ENCODE measurements at regions of chr4 and their contacts with region 1.

Region 1: DNA sequence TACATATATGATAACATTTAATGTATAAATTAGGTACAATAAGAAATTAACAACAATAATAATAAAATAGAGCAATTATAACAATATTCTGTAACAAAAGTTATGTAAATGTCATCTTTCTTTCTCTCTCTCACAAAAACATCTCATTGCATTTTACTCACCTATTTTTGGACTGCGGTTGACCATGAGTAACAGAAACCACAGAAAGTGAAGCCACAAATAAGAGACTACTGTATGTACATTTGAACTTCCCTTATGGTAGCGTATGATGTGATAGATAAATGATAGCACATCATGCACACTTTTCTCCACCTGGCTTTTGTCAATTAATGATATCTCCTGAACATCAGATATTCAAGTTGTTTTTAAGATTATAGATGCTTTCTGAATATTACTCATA is 80.5 kb downstream of the HNRNPD start:
- DNase-seq: peak; percentile 79
- H3K4me3 ChIP-seq: peak overlapping the region; percentile 13
- H3K27ac ChIP-seq: peak overlapping the region; percentile 66
- H3K4me1 ChIP-seq: peaks cover 26% of the 10 kb centered on the region
- CTCF ChIP-seq: no peak

Region 2: GRCh38 chr4:82268050-82268825 is 25.1 kb before region 1 on chr4:
- CTCF ChIA-PET with region 1: no interaction called
- POLR2A ChIA-PET with region 1: no interaction called
- intact Hi-C with region 1: no loop called
- DNase-seq: peak; percentile 66
- H3K4me3 ChIP-seq: no peak overlapping the region
- H3K27ac ChIP-seq: no peak overlapping the region
- H3K4me1 ChIP-seq: peaks cover 18% of the 10 kb centered on the region
- CTCF ChIP-seq: peak; percentile 94

Region 3: DNA sequence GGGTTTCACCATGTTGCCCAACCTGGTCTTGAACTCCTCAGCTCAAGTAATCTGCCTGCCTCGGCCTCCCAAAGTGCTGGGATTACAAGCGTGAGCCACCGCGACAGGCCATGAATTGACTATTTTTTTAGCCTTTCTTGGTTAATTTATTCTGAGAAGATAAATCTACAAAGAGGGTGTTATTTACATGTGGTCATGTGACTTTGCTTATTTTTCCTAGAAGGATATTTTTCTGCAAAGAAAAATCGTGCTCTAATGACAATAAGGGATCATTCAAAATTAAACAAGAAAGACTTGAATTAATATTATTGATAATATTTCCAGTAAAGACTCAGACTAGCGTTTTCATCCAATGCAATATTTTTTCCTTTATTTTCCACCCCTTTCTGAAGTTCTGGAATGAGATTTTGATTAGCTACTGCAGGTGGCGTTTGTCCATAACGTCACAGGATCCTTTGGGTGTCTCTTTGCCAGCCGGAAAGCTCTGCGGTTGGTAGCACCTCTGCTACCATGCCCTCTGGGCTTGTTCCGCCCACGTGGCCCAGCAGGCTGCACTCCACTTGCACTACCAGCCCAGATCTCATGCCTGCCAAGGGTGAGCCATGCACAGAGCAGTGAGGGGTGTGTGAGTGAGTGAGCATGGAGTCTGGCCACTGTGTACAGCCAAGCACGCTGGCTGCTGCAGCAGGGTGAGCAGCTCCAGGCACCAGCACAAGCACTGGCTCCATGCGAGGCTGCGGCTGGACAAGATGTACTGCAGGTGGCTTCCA is 86.8 kb after region 1 on chr4:
- CTCF ChIA-PET with region 1: no interaction called
- POLR2A ChIA-PET with region 1: no interaction called
- intact Hi-C with region 1: no loop called
- DNase-seq: no peak
- H3K4me3 ChIP-seq: no peak overlapping the region
- H3K27ac ChIP-seq: no peak overlapping the region
- H3K4me1 ChIP-seq: peaks cover 9% of the 10 kb centered on the region
- CTCF ChIP-seq: no peak

Region 4: GRCh38 chr4:82402201-82402775 is 109.0 kb after region 1 on chr4:
- CTCF ChIA-PET with region 1: interaction called, 10 read pairs
- POLR2A ChIA-PET with region 1: no interaction called
- intact Hi-C with region 1: no loop called
- DNase-seq: no peak
- H3K4me3 ChIP-seq: no peak overlapping the region
- H3K27ac ChIP-seq: no peak overlapping the region
- H3K4me1 ChIP-seq: no peaks in the 10 kb centered on the region
- CTCF ChIP-seq: no peak

Region 5: DNA sequence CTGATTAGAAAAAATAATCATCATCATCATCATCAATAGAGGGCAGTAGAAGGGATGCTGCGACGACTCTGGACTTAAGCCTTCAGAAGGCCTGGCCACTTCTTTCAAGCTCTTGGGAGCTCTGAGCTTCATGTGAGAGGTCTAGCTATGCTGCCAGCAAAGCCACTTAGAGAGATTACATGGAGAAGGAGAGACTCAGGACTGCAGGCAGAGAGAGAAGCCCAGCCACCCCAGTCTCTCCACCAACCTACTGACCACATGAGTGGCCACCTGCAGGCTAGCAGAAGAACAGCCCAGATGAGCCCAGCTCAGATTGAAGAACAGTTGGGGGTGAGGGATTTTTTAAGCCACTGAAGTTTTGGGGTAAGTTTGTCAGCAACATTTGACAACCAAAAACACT is 285.6 kb after region 1 on chr4:
- CTCF ChIA-PET with region 1: no interaction called
- POLR2A ChIA-PET with region 1: no interaction called
- intact Hi-C with region 1: no loop called
- DNase-seq: no peak
- H3K4me3 ChIP-seq: no peak overlapping the region
- H3K27ac ChIP-seq: no peak overlapping the region
- H3K4me1 ChIP-seq: no peaks in the 10 kb centered on the region
- CTCF ChIP-seq: no peak

Measured in OCI-LY7 (cell line).